ENCODE measurements at regions of chr2 and their contacts with region 1.

Region 1: GRCh38 chr2:101893681-101894381 is 97.9 kb upstream of the IL1R2 start:
- DNase-seq: no peak
- H3K4me3 ChIP-seq: no peak overlapping the region
- H3K4me3 Mint-ChIP-seq: no peak overlapping the region
- H3K27ac ChIP-seq: no peak overlapping the region
- H3K27ac Mint-ChIP-seq: no peak overlapping the region
- H3K4me1 ChIP-seq: peaks cover 0 to 1% of the 10 kb centered on the region in 2 donors
- H3K4me1 Mint-ChIP-seq: peaks cover 3% of the 10 kb centered on the region
- H3K27me3 ChIP-seq: no peaks in the 10 kb centered on the region
- H3K27me3 Mint-ChIP-seq: peaks cover 0 to 2% (median 0%) of the 10 kb centered on the region in 3 donors
- CTCF ChIP-seq: no peak

Region 2: GRCh38 chr2:101949304-101949703 is 55.5 kb after region 1 on chr2:
- intact Hi-C with region 1: loop called in 1 of 2 experiments (anchors 10 kb)
- DNase-seq: peak in 2 of 3 donors; percentile 46 to 56
- H3K4me3 ChIP-seq: no peak overlapping the region
- H3K4me3 Mint-ChIP-seq: no peak overlapping the region
- H3K27ac ChIP-seq: no peak overlapping the region
- H3K27ac Mint-ChIP-seq: peak overlapping the region in 2 of 7 donors; percentile 15 to 36
- H3K4me1 ChIP-seq: peaks cover 9 to 19% of the 10 kb centered on the region in 2 donors
- H3K4me1 Mint-ChIP-seq: peaks cover 27% of the 10 kb centered on the region
- H3K27me3 ChIP-seq: no peaks in the 10 kb centered on the region
- H3K27me3 Mint-ChIP-seq: peaks cover 0 to 3% (median under 1%) of the 10 kb centered on the region in 3 donors
- CTCF ChIP-seq: no peak